ENCODE measurements at regions of chr9 and their contacts with region 1.

Region 1: DNA sequence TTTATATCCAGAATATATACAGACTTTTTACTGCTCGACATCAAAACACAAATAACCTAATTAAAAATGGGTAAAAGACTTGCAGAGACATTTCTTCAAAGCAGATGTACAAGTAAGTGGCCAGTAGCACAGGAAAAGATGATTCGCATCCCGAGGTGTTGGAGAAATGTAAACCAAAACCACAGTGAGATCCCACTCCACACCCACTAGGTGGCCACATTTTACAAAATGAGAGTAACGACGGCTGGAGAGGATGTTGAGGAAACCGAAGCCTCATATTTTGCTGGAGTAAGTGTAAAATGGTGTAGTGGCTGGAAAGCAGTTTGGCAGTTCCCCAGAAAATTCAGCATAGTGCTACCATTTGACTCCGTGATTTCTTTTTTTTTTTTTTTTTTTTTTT is 21.2 kb upstream of the GBGT1 start:
- DNase-seq: peak; percentile 54
- H3K4me3 ChIP-seq: no peak overlapping the region
- H3K27ac ChIP-seq: no peak overlapping the region
- H3K4me1 ChIP-seq: no peaks in the 10 kb centered on the region
- CTCF ChIP-seq: peak; percentile 71

Region 2: DNA sequence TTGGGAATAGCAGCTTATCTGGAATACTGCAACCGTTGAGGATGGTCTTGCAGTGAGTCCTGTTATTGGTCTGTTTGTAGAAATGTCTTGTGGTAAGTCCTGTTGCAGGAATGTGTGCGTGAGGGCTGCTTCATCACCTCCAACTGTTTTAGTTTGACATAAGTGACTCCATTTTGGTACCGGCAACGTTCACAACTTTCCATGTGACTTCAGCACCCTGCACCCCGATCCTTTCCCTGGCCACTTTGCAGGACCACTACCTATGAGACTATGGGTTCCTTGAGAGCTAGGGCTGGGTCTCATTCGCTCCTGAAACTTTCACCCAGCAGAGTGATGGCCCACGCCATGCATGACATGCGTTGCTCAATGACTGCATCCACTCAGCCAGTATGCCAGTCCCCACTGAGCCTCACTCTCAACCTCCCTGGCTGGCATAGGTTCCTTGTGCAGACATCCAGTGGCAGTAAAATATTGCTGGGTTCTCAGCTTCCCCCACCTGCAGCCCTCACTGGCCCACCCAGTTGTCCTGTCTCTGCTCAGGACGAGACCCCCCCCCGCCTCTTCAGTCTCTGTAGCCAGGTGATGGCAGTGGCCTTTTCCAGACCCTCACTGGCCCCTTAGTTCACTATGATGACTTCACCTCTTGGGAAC is 143.0 kb after region 1 on chr9:
- CTCF ChIA-PET with region 1: no interaction called
- POLR2A ChIA-PET with region 1: no interaction called
- intact Hi-C with region 1: loop called (anchors 5 kb)
- DNase-seq: no peak
- H3K4me3 ChIP-seq: no peak overlapping the region
- H3K27ac ChIP-seq: no peak overlapping the region
- H3K4me1 ChIP-seq: no peaks in the 10 kb centered on the region
- CTCF ChIP-seq: no peak

Measured in OCI-LY7 (cell line).